ENCODE measurements at regions of chr16 and their contacts with region 1.

Region 1: DNA sequence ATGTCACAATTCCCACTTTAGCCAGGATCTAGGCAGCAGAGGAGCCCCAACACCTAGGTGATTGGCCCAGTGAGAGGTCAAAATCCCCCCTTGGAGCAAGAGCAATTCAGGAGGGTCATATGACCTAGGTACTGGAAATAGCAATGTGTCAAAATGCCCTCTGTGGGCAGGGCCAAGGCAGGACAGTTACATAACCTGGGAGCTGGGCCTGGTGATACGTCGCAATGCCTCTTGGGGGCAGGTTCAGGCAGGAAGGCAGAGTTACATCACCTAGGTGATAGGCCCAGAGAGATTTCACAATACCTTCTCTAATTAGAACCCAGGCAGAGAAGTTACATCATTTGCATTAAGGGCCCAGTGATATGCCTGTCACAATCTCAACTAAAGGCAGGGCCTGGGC is 1906.3 kb downstream of the TP53TG3F start:
- DNase-seq: no peak
- H3K4me3 ChIP-seq: no peak overlapping the region
- H3K27ac ChIP-seq: no peak overlapping the region
- H3K4me1 ChIP-seq: no peaks in the 10 kb centered on the region
- H3K27me3 ChIP-seq: no peaks in the 10 kb centered on the region
- CTCF ChIP-seq: no peak

Region 2: GRCh38 chr16:35425270-35425669 is 59.6 kb after region 1 on chr16:
- intact Hi-C with region 1: loop called (anchors 10 kb)
- DNase-seq: no peak
- H3K4me3 ChIP-seq: no peak overlapping the region
- H3K27ac ChIP-seq: no peak overlapping the region
- H3K4me1 ChIP-seq: no peaks in the 10 kb centered on the region
- H3K27me3 ChIP-seq: no peaks in the 10 kb centered on the region
- CTCF ChIP-seq: no peak